Activated naive CD4-positive, alpha-beta T cell treated with anti-CD3 and anti-CD28 coated beads for 36 hours (primary cell): ENCODE measurements at regions of chr2 and their contacts with region 1.

Region 1: DNA sequence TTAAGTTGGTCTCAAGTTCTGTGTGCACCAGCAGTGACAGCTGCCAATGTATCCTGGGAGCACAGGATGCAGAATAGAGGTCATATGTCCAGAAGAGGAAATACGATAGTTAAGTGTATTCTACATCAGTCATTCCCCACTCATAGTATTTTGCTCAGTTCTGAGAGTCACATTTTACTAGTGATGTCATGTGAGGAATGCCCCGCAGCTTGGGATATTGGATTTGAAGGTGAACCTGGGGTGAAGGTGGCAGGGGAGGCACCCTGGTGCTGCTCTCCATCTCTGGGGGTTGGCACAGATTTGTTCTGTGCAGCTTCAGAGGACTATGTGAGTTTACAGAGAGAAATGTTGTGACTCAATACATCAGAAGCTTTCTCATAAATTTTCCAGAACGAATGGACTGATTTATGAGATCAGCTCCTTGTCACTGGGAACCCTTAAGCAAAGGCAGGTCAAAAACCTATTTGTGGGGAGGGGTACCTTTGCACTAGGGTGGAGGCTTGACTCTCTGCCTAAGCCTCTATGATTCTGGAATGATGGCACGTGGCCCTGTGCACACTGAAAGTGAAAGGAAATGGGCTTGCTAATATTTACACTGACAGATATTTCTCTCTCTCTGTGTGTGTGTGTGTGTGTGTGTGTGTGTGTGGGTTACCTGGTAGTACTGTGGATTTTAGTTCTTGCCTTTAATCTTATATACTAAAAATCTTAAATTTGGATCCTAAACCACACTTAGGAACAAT is 95.9 kb downstream of the NEB start:
- DNase-seq: peak; percentile 55
- H3K4me3 Mint-ChIP-seq: peak overlapping the region; percentile 50
- H3K27ac Mint-ChIP-seq: peak overlapping the region; percentile 82
- H3K4me1 Mint-ChIP-seq: peaks cover 30% of the 10 kb centered on the region
- H3K27me3 Mint-ChIP-seq: no peaks in the 10 kb centered on the region

Region 2: GRCh38 chr2:151409601-151410484 is 228.5 kb before region 1 on chr2 and contains the start of gene RIF1:
- CTCF ChIA-PET with region 1: no interaction called
- intact Hi-C with region 1: loop called (anchors 2 kb)
- DNase-seq: peak; percentile 88
- H3K4me3 Mint-ChIP-seq: peak within 1 kb of the TSS; percentile 100
- H3K27ac Mint-ChIP-seq: peak within 1 kb of the TSS; percentile 95
- H3K4me1 Mint-ChIP-seq: peaks cover 18% of the 10 kb centered on the region
- H3K27me3 Mint-ChIP-seq: no peaks in the 10 kb centered on the region
- total RNA-seq, gene RIF1: 53.0 TPM

Region 3: GRCh38 chr2:151614606-151615306 is 23.6 kb before region 1 on chr2:
- CTCF ChIA-PET with region 1: interaction called, 3 read pairs
- intact Hi-C with region 1: loop called (anchors 2 kb)
- DNase-seq: no peak
- H3K4me3 Mint-ChIP-seq: no peak overlapping the region
- H3K27ac Mint-ChIP-seq: no peak overlapping the region
- H3K4me1 Mint-ChIP-seq: peaks cover 12% of the 10 kb centered on the region
- H3K27me3 Mint-ChIP-seq: no peaks in the 10 kb centered on the region

Region 4: DNA sequence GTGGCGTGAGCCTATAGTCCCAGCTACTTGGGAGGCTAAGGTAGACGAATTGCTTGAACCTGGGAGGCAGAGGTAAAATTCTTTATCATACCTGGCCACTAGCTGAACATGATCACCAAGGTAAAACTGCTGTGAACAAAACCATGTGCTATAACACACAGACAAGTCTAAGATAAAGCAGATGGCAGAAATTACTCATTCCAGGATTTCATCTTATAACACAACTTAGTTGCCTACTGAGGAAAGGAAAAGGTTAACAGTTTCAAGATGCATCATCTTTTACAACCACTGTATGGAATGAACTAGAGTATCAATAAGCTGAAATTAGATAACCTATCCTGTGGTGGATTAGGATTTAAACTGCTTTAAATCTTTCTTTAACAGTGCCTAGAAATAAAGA is 181.6 kb after region 1 on chr2:
- CTCF ChIA-PET with region 1: interaction called, 5 read pairs
- intact Hi-C with region 1: loop called (anchors 1 kb)
- DNase-seq: no peak
- H3K4me3 Mint-ChIP-seq: no peak overlapping the region
- H3K27ac Mint-ChIP-seq: no peak overlapping the region
- H3K4me1 Mint-ChIP-seq: peaks cover 56% of the 10 kb centered on the region
- H3K27me3 Mint-ChIP-seq: no peaks in the 10 kb centered on the region

Region 5: DNA sequence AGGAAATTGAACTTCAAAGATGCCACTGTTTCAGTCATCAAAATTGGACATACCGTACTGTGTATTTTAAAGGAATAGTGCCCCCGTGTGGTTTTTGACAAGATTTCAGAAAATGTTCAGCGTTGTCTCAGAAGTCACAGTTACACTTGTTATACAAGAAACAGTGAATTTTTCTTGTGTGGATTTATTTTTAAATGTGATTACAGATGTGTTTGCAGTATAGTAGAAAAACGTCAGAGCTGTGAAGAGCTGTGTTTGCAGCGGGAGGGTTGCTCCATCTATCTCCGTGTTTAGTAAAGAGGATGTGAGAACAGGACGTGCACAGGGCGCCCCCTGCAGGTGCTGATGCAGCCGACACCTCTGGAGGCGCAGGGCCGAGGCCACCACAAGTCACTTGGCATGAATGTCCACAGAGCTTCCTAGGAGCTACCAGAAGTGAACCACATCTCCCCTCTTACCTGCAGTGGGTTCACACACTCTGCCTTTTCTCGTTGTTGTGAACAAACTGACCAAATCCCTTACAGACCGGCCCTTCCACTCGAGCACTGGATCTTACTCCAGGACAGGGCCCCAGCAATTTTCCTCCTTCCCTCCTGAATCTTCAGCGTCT is 387.4 kb after region 1 on chr2:
- CTCF ChIA-PET with region 1: interaction called, 10 read pairs
- intact Hi-C with region 1: loop called (anchors 1 kb)
- DNase-seq: peak; percentile 87
- H3K4me3 Mint-ChIP-seq: peak overlapping the region; percentile 73
- H3K27ac Mint-ChIP-seq: peak overlapping the region; percentile 63
- H3K4me1 Mint-ChIP-seq: peaks cover 4% of the 10 kb centered on the region
- H3K27me3 Mint-ChIP-seq: peaks cover 5% of the 10 kb centered on the region